ENCODE measurements at regions of chr7 and their contacts with region 1.

Region 1: GRCh38 chr7:107150375-107151073 is 18.3 kb upstream of the HBP1 start:
- DNase-seq: peak; percentile 59 to 76 (median 68)
- H3K4me3 ChIP-seq: no peak overlapping the region
- H3K4me3 Mint-ChIP-seq: no peak overlapping the region
- H3K27ac ChIP-seq: no peak overlapping the region
- H3K27ac Mint-ChIP-seq: peak overlapping the region in 1 of 8 donors; percentile 22
- H3K4me1 ChIP-seq: no peaks in the 10 kb centered on the region
- H3K4me1 Mint-ChIP-seq: peaks cover 0 to 11% (median 4%) of the 10 kb centered on the region in 3 donors
- H3K27me3 ChIP-seq: no peaks in the 10 kb centered on the region
- H3K27me3 Mint-ChIP-seq: peaks cover 0 to 6% of the 10 kb centered on the region in 2 donors

Region 2: DNA sequence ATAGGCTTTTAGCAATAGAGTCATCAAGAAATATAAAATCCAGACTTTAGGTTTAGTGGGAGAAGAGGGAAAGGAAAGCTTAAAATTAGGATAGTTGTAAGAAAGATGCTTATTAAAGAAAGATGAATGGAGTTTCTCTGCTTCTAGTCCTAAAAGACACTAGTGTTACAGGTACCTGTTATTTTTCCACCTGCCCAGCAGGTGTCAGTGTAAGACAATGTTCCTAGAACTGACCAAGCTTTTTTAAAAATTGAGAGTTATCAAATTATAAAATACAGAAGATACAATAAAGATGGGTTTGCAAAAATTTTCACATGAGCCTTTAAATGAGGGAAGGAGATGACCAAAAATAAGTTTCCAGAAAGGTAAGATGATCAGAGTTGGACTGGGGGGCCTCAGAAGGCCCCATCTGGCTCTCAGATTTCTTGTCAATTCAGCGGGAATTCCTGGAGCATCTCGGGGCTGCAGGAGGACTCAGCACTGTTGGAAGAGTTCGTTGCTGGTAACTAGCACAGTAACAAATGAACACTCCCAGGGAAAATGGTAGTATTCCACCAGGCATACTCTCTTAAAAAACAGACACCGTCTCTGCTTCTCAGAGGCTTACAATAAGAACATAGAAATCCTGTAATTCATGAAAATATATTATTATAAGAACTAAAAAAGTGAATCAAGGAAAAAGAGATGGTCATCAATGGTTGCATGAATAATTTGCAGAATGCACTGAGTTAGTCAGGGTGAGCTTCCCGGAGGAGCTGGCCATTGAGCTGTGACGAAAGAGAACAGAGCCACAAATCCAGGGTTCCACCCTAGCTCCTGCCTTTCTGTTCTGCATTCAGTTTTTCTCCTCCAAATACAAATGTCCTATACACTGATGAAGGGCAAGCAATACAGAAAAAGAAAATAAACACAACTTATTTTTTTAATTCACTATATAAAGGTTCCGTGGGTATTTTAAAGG is 357.2 kb before region 1 on chr7:
- CTCF ChIA-PET with region 1: interaction called, 27 read pairs
- POLR2A ChIA-PET with region 1: no interaction called
- DNase-seq: peak in 3 of 5 donors; percentile 20 to 43 (median 37)
- H3K4me3 ChIP-seq: no peak overlapping the region
- H3K4me3 Mint-ChIP-seq: no peak overlapping the region
- H3K27ac ChIP-seq: no peak overlapping the region
- H3K27ac Mint-ChIP-seq: peak overlapping the region in 1 of 8 donors; percentile 29
- H3K4me1 ChIP-seq: no peaks in the 10 kb centered on the region
- H3K4me1 Mint-ChIP-seq: peaks cover 3% of the 10 kb centered on the region in 3 donors
- H3K27me3 ChIP-seq: no peaks in the 10 kb centered on the region
- H3K27me3 Mint-ChIP-seq: no peaks in the 10 kb centered on the region

Region 3: DNA sequence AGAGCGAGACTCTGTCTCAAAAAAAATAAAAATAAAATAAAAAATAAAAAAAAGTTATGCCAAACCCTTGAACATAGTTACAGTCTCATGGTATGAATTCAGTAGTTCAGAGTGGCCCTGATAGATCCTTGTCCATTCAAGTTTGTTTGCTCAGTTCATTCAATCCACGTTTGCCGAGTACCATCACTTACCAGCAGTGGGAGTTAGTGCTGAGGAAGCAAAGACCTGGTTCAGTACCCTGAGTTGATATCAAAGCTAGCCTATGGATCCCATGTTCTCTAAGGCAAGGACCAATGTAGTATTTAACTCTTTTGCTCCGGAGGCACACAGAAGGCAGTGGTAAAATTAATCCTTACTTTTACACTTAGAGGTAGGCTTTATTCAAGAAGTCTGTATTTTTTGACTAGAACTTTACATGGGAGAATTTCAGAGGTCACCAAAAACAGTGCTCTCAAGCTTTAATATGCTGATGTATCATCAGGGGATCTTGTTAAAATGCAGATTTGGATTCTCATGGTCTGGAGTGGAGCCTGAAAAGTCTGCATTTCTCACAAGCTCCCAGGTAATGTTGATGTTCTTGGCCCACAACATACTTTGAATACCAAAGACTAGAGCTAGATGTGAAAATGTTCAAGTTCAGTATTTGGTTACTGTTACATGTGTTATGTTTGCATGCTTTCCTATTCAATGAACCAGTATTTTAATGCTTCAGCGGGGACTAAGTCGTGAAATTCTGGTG is 19.9 kb before region 1 on chr7:
- CTCF ChIA-PET with region 1: interaction called, 11 read pairs
- POLR2A ChIA-PET with region 1: no interaction called
- DNase-seq: no peak
- H3K4me3 ChIP-seq: no peak overlapping the region
- H3K4me3 Mint-ChIP-seq: no peak overlapping the region
- H3K27ac ChIP-seq: no peak overlapping the region
- H3K27ac Mint-ChIP-seq: no peak overlapping the region
- H3K4me1 ChIP-seq: peaks cover 12% of the 10 kb centered on the region
- H3K4me1 Mint-ChIP-seq: peaks cover 12 to 14% (median 14%) of the 10 kb centered on the region in 3 donors
- H3K27me3 ChIP-seq: no peaks in the 10 kb centered on the region
- H3K27me3 Mint-ChIP-seq: no peaks in the 10 kb centered on the region

Measured in CD8-positive, alpha-beta memory T cell (primary cell).